HAP-1 (cell line): ENCODE measurements at regions of chr18 and their contacts with region 1.

Region 1: DNA sequence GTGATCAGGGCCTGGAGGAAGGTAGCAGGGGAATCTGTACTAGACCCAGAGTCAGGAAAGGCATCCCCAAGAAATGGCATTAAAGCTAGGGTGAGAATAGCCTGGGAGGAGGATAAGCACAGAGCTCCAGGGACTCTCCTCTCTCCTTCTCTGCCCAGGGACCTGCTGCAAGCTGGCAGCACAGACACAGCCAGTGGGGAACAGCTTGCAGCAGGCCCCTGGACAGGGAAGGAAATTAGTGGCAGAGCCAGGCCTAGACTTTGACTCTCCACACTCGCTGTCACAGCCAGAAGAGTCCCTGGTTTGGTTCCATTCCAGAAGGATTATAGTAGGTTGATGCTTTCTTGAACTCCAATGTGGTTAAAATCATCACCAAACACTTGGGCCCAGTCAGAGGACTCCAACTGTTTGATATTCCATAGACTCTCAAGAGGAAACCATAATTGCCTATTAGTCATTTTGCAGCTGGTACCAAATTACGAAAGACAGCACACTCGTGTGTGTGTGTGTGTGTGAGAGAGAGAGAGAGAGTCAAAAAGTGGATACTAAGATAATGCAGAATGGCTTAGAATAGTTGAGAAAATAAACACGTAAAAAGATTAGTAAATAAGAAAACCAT is 95.5 kb upstream of the ATP8B1 start:
- DNase-seq: no peak
- H3K4me3 ChIP-seq: no peak overlapping the region
- H3K4me1 ChIP-seq: no peaks in the 10 kb centered on the region
- H3K27me3 ChIP-seq: no peaks in the 10 kb centered on the region

Region 2: GRCh38 chr18:58484989-58485981 is 586.7 kb after region 1 on chr18:
- in situ Hi-C with region 1: loop called (anchors 10 kb)
- DNase-seq: peak in 1 of 2 experiments; percentile 24
- H3K4me3 ChIP-seq: no peak overlapping the region
- H3K4me1 ChIP-seq: no peaks in the 10 kb centered on the region
- H3K27me3 ChIP-seq: peaks cover 6% of the 10 kb centered on the region; the same call in 1 of the 2 replicates